Left cardiac atrium (tissue), 4 donors: ENCODE measurements at regions of chr11 and their contacts with region 1.

Region 1: GRCh38 chr11:86608251-86608799 is 64.1 kb downstream of the ME3 start:
- DNase-seq: peak; percentile 69
- ATAC-seq: peak; percentile 82 to 86

Region 2: GRCh38 chr11:86456052-86456939 is 152.0 kb before region 1 on chr11:
- intact Hi-C with region 1: loop called (anchors 2 to 5 kb)
- DNase-seq: peak; percentile 89
- ATAC-seq: peak; percentile 81 to 86

Region 3: DNA sequence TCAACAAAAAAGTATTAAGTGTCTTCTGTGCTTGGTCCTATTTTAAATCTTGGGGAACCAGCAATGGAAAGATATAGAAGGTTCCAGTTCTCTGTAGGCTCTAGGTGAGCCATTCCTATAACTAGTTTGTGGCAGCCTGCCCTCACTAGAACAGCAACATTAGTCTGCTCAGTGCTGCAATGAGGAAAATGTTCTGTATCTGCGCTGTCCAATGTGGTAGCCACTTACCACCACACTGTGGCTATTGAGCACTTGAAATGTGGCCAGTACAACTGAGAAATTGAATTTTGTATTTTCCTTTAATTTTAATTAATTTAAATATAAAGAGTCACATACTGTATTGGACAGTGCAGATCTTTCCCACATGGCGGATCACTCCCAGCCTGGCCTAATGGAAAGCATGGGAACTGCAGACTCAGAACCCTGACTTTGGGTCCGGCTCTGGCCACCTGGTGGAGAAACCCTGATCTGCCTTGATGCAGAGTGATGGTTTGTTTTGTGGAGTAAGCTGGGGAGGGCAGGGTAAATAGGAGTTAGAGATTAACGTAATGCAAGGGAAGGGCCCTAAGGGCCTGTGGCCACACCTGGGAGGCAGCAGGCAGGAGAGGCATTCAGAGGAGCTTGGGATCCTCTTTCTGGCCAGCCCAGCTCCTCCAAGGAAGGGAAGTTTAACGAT is 36.9 kb before region 1 on chr11:
- intact Hi-C with region 1: no loop called
- DNase-seq: no peak
- ATAC-seq: no peak

Region 4: GRCh38 chr11:86802601-86803051 is 194.3 kb after region 1 on chr11:
- intact Hi-C with region 1: loop called (anchors 5 kb)
- DNase-seq: no peak
- ATAC-seq: peak in 1 of 2 donors; percentile 11

Region 5: GRCh38 chr11:86811637-86812321 is 203.5 kb after region 1 on chr11:
- intact Hi-C with region 1: loop called (anchors 5 kb)
- DNase-seq: no peak
- ATAC-seq: peak in 1 of 2 donors; percentile 67

Region 6: GRCh38 chr11:86818466-86819192 is 210.3 kb after region 1 on chr11:
- intact Hi-C with region 1: loop called (anchors 5 kb)
- DNase-seq: no peak
- ATAC-seq: peak; percentile 33 to 41